Endothelial cell of umbilical vein (primary cell): ENCODE measurements at regions of chr19 and their contacts with region 1.

Region 1: DNA sequence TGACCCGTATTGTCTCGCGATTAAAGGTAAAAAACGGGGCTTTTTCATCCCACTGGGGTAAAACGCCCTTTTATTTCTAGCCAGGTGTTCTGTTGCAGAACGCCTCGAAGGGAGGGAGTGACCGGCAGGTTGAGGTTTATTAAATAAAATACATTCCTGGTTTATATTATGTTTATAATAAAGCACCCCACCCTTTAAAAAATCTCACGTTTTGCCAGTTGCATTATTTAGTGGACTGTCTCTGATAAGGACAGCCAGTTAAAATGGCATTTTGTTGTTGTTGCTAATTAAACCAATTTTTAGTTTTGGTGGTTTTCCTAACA is 25.1 kb upstream of the ZNF850 start:
- DNase-seq: no peak
- H3K4me3 ChIP-seq: peak overlapping the region; percentile 23 to 83 (median 73)
- H3K27ac ChIP-seq: peak overlapping the region; percentile 34
- H3K4me1 ChIP-seq: no peaks in the 10 kb centered on the region
- H3K27me3 ChIP-seq: no peaks in the 10 kb centered on the region
- CTCF ChIP-seq: no peak
- POLR2A ChIP-seq: no peak

Region 2: GRCh38 chr19:36772311-36773222 is 25.2 kb before region 1 on chr19 and contains the start of gene ZNF850:
- CTCF ChIA-PET with region 1: interaction called, 3 read pairs
- POLR2A ChIA-PET with region 1: no interaction called
- dilution Hi-C with region 1: no loop called
- intact Hi-C with region 1: loop called (anchors 1 kb)
- DNase-seq: peak; percentile 92
- H3K4me3 ChIP-seq: peak within 1 kb of the TSS; percentile 31 to 76 (median 40)
- H3K27ac ChIP-seq: peak within 1 kb of the TSS; percentile 33
- H3K4me1 ChIP-seq: peaks cover 11% of the 10 kb centered on the region
- H3K27me3 ChIP-seq: no peaks in the 10 kb centered on the region
- CTCF ChIP-seq: no peak
- POLR2A ChIP-seq: no peak
- total RNA-seq, gene ZNF850: 3.6 and 4.5 TPM in 2 replicates

Region 3: DNA sequence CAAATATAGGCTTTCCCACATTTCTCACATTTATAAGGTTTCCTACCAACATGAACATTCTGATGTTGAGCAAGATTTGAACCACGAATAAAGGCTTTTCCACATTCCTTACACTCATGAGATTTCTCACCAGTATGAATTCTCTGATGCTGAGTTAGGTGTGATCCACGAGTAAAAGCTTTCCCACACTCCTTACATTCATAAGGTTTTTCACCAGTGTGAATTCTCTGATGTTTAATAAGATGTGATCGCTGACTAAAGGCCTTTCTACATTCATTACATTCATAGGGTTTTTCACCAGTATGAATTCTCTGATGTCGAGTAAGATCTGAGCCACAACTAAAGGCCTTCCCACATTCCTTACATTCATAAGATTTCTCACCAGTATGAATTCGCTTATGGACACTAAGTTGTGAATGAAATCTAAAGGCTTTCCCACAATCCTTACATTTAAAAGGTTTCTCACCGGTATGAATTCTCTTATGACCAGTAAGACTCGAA is 21.4 kb after region 1 on chr19:
- CTCF ChIA-PET with region 1: no interaction called
- POLR2A ChIA-PET with region 1: no interaction called
- dilution Hi-C with region 1: no loop called
- intact Hi-C with region 1: no loop called
- DNase-seq: no peak
- H3K4me3 ChIP-seq: no peak overlapping the region
- H3K27ac ChIP-seq: no peak overlapping the region
- H3K4me1 ChIP-seq: no peaks in the 10 kb centered on the region
- H3K27me3 ChIP-seq: no peaks in the 10 kb centered on the region
- CTCF ChIP-seq: no peak
- POLR2A ChIP-seq: no peak

Region 4: GRCh38 chr19:36837906-36838783 is 40.4 kb after region 1 on chr19 and contains the start of gene ZNF790:
- CTCF ChIA-PET with region 1: no interaction called
- POLR2A ChIA-PET with region 1: no interaction called
- dilution Hi-C with region 1: no loop called
- intact Hi-C with region 1: loop called (anchors 1 kb)
- DNase-seq: peak; percentile 91
- H3K4me3 ChIP-seq: peak within 1 kb of the TSS; percentile 37 to 64 (median 43)
- H3K27ac ChIP-seq: peak within 1 kb of the TSS; percentile 44
- H3K4me1 ChIP-seq: peaks cover 3% of the 10 kb centered on the region
- H3K27me3 ChIP-seq: no peaks in the 10 kb centered on the region
- CTCF ChIP-seq: no peak
- POLR2A ChIP-seq: peak; percentile 44
- total RNA-seq, gene ZNF790: 5.2 and 5.6 TPM in 2 replicates

Region 5: DNA sequence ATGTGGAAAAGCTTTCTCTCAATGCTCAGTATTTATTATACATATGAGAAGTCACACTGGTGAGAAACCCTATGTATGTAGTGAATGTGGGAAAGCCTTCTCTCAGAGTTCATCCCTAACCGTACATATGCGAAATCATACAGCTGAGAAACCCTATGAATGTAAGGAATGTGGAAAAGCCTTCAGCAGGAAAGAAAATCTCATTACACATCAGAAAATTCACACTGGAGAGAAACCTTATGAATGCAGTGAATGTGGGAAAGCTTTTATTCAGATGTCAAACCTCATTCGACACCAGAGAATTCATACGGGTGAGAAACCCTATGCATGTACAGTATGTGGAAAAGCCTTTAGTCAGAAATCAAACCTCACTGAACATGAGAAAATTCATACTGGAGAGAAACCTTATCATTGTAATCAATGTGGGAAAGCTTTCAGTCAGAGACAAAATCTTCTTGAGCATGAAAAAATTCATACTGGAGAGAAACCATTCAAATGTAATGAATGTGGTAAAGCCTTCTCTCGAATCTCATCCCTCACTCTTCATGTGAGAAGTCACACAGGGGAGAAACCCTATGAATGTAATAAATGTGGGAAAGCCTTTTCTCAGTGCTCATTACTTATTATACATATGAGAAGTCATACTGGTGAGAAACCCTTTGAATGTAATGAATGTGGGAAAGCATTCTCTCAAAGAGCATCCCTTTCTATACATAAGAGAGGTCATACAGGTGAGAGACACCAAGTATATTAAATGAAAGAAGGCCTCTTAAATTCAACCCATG is 152.8 kb after region 1 on chr19:
- CTCF ChIA-PET with region 1: no interaction called
- POLR2A ChIA-PET with region 1: no interaction called
- dilution Hi-C with region 1: no loop called
- intact Hi-C with region 1: no loop called
- DNase-seq: no peak
- H3K4me3 ChIP-seq: no peak overlapping the region
- H3K27ac ChIP-seq: no peak overlapping the region
- H3K4me1 ChIP-seq: no peaks in the 10 kb centered on the region
- H3K27me3 ChIP-seq: no peaks in the 10 kb centered on the region
- CTCF ChIP-seq: no peak
- POLR2A ChIP-seq: no peak